ENCODE measurements at regions of chr19 and their contacts with region 1.

Region 1: DNA sequence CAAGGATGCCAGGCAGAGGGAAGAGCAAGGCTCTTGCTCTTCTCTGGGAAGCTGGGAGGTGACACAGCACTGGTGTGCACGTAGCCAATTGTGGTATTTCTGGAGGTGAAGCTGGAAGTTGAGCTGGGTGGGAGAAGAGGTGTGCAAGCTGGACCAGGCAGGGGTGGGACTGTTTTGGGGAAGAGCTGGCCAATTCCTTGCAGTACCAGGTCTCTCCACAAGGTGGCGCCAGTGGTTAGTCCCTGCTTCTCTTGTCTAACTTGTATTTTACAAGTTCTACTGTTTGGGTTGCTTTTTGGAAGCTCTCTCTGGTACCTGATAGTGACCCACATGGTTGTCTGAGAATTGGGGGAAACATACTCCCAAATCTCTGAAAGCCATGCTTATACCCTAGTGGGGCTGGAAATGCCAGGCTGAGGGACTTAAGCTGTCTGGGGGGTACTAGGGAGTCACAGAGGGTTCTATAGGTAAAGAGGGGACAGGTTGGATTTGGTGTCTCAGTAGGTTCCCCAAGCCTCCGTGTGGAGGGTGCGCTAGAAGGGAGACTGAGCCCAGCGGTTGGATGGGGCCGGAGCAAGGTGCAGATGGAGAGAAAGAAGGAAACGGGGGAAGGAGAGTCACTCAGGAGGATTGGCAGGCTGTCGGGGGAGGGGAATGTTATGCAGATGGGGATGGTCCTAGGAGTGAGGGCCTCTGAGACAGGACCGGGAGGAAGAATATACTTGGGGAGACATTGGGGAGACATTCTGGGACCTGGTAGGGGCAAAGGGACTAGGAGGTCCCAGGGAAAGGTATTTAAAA is 3.0 kb downstream of the HPN start:
- DNase-seq: peak; percentile 65
- H3K4me3 ChIP-seq: no peak overlapping the region
- H3K27ac ChIP-seq: no peak overlapping the region
- H3K4me1 ChIP-seq: peaks cover 11% of the 10 kb centered on the region
- H3K27me3 ChIP-seq: no peaks in the 10 kb centered on the region
- CTCF ChIP-seq: peak; percentile 96 to 97
- POLR2A ChIP-seq: no peak

Region 2: DNA sequence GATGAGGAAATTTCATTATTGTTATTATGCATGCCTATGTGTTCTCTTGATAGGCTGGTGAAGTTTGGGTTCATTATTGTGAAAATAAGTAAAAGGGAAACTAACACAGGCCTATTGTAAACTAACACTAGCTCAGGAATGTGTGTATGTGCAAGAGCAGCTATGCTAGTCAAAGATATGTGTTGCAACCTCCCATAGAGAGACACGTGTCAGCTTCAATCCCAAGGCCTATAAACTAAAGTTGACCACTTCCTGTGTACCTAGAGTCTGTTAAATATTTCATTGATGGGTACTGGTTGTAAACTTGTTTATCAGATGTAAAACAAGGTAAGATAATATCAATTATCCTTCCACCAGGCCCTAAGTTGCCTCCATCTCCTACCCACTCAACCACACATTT is 162.5 kb before region 1 on chr19:
- CTCF ChIA-PET with region 1: no interaction called
- POLR2A ChIA-PET with region 1: no interaction called
- dilution Hi-C with region 1: no loop called
- intact Hi-C with region 1: no loop called
- DNase-seq: no peak
- H3K4me3 ChIP-seq: no peak overlapping the region
- H3K27ac ChIP-seq: no peak overlapping the region
- H3K4me1 ChIP-seq: no peaks in the 10 kb centered on the region
- H3K27me3 ChIP-seq: no peaks in the 10 kb centered on the region
- CTCF ChIP-seq: no peak
- POLR2A ChIP-seq: no peak

Region 3: DNA sequence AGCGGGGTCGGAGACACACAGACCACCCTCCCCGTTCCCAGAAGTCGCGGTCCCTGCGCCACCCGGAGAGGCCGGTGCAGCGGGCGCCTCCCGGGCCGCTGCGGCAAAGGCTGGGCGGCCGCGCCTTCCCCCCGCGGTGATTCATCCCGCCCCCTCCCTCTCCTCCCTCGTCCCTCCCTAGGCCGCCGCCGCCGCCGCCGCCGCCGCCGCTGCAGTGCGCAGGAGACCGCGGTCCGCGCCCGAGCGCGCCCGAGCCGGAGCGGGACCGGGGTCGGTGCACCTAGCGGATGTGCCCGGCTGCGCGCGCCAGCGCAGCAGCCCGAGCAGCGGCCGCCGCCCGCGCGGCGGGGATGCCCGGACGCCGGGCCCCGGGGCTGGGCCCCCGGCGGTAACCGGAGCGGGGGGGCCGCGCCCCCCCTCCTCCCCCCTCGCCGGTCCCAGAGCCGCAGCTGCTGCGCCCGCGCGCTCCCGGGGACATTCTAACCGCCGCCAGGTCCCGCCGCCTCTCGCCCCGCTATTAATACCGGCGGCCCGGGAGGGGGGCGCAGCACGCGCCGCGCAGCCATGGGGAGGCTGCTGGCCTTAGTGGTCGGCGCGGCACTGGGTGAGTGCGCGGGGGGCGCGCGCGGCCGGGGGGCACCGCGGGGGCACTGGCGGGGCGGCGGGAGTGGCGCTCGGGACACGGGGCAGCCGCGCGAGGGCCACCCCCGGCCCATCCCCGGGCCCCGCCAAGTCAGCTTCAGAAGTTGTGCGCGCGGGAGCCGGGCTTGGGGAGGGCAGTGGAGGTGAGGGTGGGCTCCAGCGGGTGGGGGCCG is 14.1 kb before region 1 on chr19 and contains the start of gene SCN1B:
- CTCF ChIA-PET with region 1: interaction called, 14 read pairs
- POLR2A ChIA-PET with region 1: interaction called, 3 read pairs
- dilution Hi-C with region 1: no loop called
- intact Hi-C with region 1: no loop called
- DNase-seq: peak; percentile 51
- H3K4me3 ChIP-seq: peak within 1 kb of the TSS; percentile 42 to 71 (median 47)
- H3K27ac ChIP-seq: no peak within 1 kb of the TSS
- H3K4me1 ChIP-seq: peaks cover 2% of the 10 kb centered on the region
- H3K27me3 ChIP-seq: no peaks in the 10 kb centered on the region
- CTCF ChIP-seq: no peak
- POLR2A ChIP-seq: no peak
- total RNA-seq, gene SCN1B: 14.2 and 15.8 TPM in 2 replicates

Region 4: DNA sequence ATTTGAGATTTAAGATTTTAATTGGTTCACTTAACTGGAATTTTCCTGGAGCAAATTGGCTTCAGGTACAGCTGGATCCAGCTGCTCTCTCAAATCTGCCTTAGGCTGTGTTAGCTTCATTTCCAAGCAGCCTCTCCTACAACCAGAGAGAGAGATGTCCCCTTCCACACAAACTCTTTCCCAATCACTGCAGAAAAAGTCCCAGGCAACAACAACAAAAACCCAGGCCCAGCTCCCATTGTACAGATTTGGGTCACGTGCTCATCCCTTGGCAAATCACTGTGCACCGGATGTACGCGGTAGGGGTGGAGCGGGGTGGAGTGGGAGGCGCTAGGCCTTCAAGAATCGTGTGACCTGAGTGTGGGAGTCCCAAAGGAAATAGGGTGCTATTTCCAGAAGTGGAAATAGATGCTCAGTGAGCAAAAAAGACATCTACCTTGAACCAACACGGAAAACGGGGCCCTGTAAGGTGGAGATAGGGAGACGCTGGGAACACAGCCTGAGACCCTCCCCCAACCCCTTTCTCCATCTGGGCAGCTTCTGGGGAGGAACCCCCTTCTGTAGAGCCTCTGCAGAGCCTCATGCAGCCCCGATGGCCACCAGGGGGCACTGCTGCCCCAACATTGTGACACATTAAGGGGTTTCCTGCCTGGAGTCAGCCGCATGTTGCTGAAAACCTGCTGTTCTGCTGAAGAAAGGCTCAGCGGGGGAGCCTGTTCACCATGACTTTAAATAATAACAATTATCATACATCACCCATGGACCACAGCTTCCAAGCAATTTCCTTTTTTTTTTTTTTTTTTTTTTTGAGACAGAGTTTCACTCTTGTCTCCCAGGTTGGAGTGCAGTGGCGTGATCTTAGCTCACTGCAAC is 22.4 kb after region 1 on chr19:
- CTCF ChIA-PET with region 1: interaction called, 13 read pairs
- POLR2A ChIA-PET with region 1: no interaction called
- dilution Hi-C with region 1: no loop called
- intact Hi-C with region 1: no loop called
- DNase-seq: peak; percentile 72
- H3K4me3 ChIP-seq: no peak overlapping the region
- H3K27ac ChIP-seq: no peak overlapping the region
- H3K4me1 ChIP-seq: no peaks in the 10 kb centered on the region
- H3K27me3 ChIP-seq: no peaks in the 10 kb centered on the region
- CTCF ChIP-seq: peak; percentile 89 to 90
- POLR2A ChIP-seq: no peak

Region 5: GRCh38 chr19:35135389-35135909 is 90.9 kb after region 1 on chr19:
- CTCF ChIA-PET with region 1: interaction called, 24 read pairs
- POLR2A ChIA-PET with region 1: no interaction called
- dilution Hi-C with region 1: no loop called
- intact Hi-C with region 1: loop called (anchors 1 kb)
- DNase-seq: peak; percentile 67
- H3K4me3 ChIP-seq: no peak overlapping the region
- H3K27ac ChIP-seq: no peak overlapping the region
- H3K4me1 ChIP-seq: no peaks in the 10 kb centered on the region
- H3K27me3 ChIP-seq: no peaks in the 10 kb centered on the region
- CTCF ChIP-seq: peak; percentile 82 to 92
- POLR2A ChIP-seq: no peak